HCT116 (cell line): ENCODE measurements at regions of chr5 and their contacts with region 1.

Region 1: DNA sequence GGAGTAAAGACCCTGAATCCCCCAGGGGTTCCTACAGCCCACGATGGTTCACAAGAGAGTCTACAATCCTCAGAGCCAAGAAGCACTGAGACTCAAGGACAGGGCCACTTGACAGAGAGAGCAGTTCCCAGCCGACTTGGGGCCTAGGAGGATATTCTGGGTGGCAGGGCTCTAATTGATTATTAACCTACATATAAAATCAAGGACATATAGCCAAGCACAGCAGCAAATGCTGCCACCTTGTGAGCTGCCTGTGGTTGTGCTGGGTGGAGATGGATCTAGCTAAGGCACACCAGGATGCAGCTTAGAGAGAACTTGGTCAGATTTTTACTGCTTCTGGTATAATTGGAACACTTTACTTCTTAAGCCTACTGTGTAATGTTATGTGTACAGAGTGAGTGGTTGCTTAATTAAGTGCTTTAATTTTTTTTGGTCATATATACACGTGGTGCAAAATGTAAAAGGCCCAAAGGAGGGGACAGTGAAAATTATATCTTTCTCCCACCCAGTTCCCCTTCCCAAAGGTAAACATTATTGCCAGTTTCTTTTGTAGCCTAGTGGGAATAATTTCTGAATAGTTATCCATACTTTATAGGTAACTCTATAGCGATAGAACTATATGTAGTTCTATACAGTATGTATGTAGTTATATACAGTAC is 78.8 kb downstream of the F2RL2 start:
- DNase-seq: peak; percentile 31
- ATAC-seq: peak; percentile 95
- H3K4me3 ChIP-seq: no peak overlapping the region
- H3K27ac ChIP-seq: no peak overlapping the region
- H3K4me1 ChIP-seq: no peaks in the 10 kb centered on the region
- H3K27me3 ChIP-seq: no peaks in the 10 kb centered on the region
- CTCF ChIP-seq: peak; percentile 63 to 65 (median 64); a peak in 5 of 6 replicates
- POLR2A ChIP-seq: no peak
- RAD21 ChIP-seq: peak; percentile 73

Region 2: GRCh38 chr5:76104027-76104426 is 440.4 kb before region 1 on chr5:
- CTCF ChIA-PET with region 1: no interaction called
- POLR2A ChIA-PET with region 1: no interaction called
- RAD21 ChIA-PET with region 1: no interaction called
- intact Hi-C with region 1: no loop called
- DNase-seq: no peak
- ATAC-seq: no peak
- H3K4me3 ChIP-seq: no peak overlapping the region
- H3K27ac ChIP-seq: no peak overlapping the region
- H3K4me1 ChIP-seq: no peaks in the 10 kb centered on the region
- H3K27me3 ChIP-seq: peaks cover 26% of the 10 kb centered on the region
- CTCF ChIP-seq: no peak
- POLR2A ChIP-seq: no peak
- RAD21 ChIP-seq: no peak

Region 3: DNA sequence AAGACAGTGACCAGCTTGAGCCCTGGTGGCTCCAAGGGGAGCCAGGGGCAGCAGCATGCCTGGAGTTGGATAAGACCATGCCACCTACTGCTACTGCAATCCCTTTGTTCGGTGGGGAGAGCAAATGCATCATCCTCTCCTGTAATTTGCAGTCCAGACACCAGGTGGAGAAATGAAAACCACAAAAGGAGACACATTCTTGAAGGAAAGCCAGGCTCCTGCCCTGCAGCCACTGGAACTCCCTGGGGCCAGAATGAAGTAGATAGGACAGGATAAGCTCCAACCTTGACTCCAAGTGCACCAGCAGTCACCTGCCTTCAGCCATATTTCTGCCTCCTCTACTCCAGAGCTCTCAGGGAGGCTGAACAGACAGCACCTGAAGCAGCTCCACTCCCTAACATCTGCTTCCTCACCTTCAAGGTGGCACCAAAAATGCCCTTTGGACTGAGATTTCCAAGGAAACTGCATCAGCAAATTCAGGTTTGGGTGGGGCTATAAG is 206.4 kb before region 1 on chr5:
- CTCF ChIA-PET with region 1: interaction called, 9 read pairs
- POLR2A ChIA-PET with region 1: no interaction called
- RAD21 ChIA-PET with region 1: interaction called, 3 to 4 read pairs
- intact Hi-C with region 1: loop called (anchors 1 kb)
- DNase-seq: peak; percentile 65
- ATAC-seq: peak; percentile 92
- H3K4me3 ChIP-seq: no peak overlapping the region
- H3K27ac ChIP-seq: no peak overlapping the region
- H3K4me1 ChIP-seq: peaks cover 5 to 10% of the 10 kb centered on the region in 2 experiments; a peak in 3 of 4 replicates
- H3K27me3 ChIP-seq: no peaks in the 10 kb centered on the region
- CTCF ChIP-seq: peak; percentile 52 to 60 (median 58)
- POLR2A ChIP-seq: no peak
- RAD21 ChIP-seq: peak; percentile 67

Region 4: GRCh38 chr5:76402886-76403765 is 141.3 kb before region 1 on chr5 and contains the start of gene IQGAP2:
- CTCF ChIA-PET with region 1: no interaction called
- POLR2A ChIA-PET with region 1: no interaction called
- RAD21 ChIA-PET with region 1: no interaction called
- intact Hi-C with region 1: loop called (anchors 2 kb)
- DNase-seq: peak; percentile 37
- ATAC-seq: peak; percentile 91
- H3K4me3 ChIP-seq: peak within 1 kb of the TSS; percentile 52 to 66
- H3K27ac ChIP-seq: no peak within 1 kb of the TSS; the same call in 1 of the 2 replicates
- H3K4me1 ChIP-seq: peaks cover 5 to 19% of the 10 kb centered on the region in 2 experiments; a peak in 2 of 4 replicates
- H3K27me3 ChIP-seq: peaks cover 14% of the 10 kb centered on the region; the same call in 1 of the 2 replicates
- CTCF ChIP-seq: peak; percentile 39 to 75 (median 71); a peak in 5 of 6 replicates
- POLR2A ChIP-seq: no peak
- RAD21 ChIP-seq: peak; percentile 55
- total RNA-seq, gene IQGAP2: 2.0 TPM

Region 5: GRCh38 chr5:76663573-76663972 is 119.2 kb after region 1 on chr5:
- CTCF ChIA-PET with region 1: no interaction called
- POLR2A ChIA-PET with region 1: no interaction called
- RAD21 ChIA-PET with region 1: no interaction called
- intact Hi-C with region 1: no loop called
- DNase-seq: no peak
- ATAC-seq: no peak
- H3K4me3 ChIP-seq: no peak overlapping the region
- H3K27ac ChIP-seq: no peak overlapping the region
- H3K4me1 ChIP-seq: no peaks in the 10 kb centered on the region
- H3K27me3 ChIP-seq: no peaks in the 10 kb centered on the region
- CTCF ChIP-seq: no peak
- POLR2A ChIP-seq: no peak
- RAD21 ChIP-seq: no peak